MCF 10A (cell line): ENCODE measurements at regions of chr7 and their contacts with region 1.

Region 1: GRCh38 chr7:92621026-92621540 is 30.9 kb upstream of the FAM133B start:
- DNase-seq: peak; percentile 81
- H3K4me3 Mint-ChIP-seq: peak overlapping the region; percentile 47
- H3K27ac Mint-ChIP-seq: no peak overlapping the region
- H3K4me1 Mint-ChIP-seq: peaks cover 22% of the 10 kb centered on the region
- H3K27me3 Mint-ChIP-seq: no peaks in the 10 kb centered on the region
- CTCF ChIP-seq: peak; percentile 75

Region 2: DNA sequence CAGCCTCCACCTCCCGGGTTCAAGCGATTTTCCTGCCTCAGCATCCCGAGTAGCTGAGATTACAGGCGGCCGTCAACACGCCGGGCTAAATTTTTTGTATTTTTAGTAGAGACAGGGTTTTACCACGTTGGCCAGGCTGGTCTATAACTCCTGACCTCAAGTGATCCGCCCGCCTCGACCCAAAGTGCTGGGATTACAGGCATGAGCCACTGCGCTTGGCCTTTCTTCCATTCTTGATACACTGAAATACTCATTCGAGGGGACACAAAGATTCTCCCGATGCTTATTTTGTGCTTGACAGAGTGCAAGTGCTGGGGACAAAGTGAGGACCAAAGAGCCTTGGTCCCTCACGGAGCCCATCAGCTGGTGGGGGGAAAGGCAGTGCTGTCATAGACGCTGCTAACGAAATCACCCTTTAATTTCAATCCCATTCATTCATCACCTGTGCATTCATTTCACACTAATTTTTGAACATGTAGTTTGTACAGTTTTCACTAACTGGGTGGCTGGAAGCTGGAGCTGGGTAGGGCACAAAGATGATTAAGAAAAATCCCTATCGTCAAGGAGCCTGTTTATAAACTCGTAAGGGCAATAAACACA is 30.3 kb before region 1 on chr7:
- CTCF ChIA-PET with region 1: interaction called, 15 read pairs
- POLR2A ChIA-PET with region 1: interaction called, 3 read pairs
- intact Hi-C with region 1: no loop called
- DNase-seq: no peak
- H3K4me3 Mint-ChIP-seq: peak overlapping the region; percentile 99
- H3K27ac Mint-ChIP-seq: peak overlapping the region; percentile 98
- H3K4me1 Mint-ChIP-seq: peaks cover 20% of the 10 kb centered on the region
- H3K27me3 Mint-ChIP-seq: no peaks in the 10 kb centered on the region
- CTCF ChIP-seq: no peak

Region 3: GRCh38 chr7:92633211-92633906 is 12.3 kb after region 1 on chr7:
- CTCF ChIA-PET with region 1: interaction called, 11 read pairs
- POLR2A ChIA-PET with region 1: interaction called, 3 read pairs
- intact Hi-C with region 1: no loop called
- DNase-seq: peak; percentile 90
- H3K4me3 Mint-ChIP-seq: peak overlapping the region; percentile 60
- H3K27ac Mint-ChIP-seq: peak overlapping the region; percentile 70
- H3K4me1 Mint-ChIP-seq: peaks cover 39% of the 10 kb centered on the region
- H3K27me3 Mint-ChIP-seq: no peaks in the 10 kb centered on the region
- CTCF ChIP-seq: no peak

Region 4: GRCh38 chr7:92691578-92691977 is 70.5 kb after region 1 on chr7:
- CTCF ChIA-PET with region 1: interaction called, 22 read pairs
- POLR2A ChIA-PET with region 1: no interaction called
- intact Hi-C with region 1: loop called (anchors 1 kb)
- DNase-seq: peak; percentile 72
- H3K4me3 Mint-ChIP-seq: no peak overlapping the region
- H3K27ac Mint-ChIP-seq: no peak overlapping the region
- H3K4me1 Mint-ChIP-seq: peaks cover 22% of the 10 kb centered on the region
- H3K27me3 Mint-ChIP-seq: no peaks in the 10 kb centered on the region
- CTCF ChIP-seq: peak; percentile 56

Region 5: DNA sequence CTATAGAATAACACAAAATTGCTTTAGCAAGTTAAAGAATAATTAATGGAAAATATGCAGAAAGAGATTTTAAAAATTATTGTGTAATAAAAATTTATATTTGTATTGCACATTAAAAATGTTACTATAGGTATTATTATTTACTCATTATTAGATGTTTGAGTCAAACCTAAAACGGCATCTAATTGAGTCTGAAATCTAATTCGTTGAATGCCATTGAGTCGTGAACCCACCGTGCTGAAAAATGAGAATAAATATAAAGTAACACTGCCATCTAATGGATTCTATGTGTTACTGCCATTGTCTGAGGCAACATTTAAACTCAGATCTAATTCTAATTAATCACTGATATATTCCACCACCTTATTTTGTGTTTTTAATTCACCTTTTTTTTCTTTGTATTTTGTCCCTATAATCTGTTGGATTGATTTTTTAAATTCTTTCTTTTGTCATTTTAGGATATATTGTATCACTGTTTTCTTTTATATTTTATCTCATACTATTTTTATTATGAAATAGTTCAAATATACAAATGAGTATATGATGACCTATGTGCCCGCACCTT is 434.5 kb after region 1 on chr7:
- CTCF ChIA-PET with region 1: interaction called, 8 read pairs
- POLR2A ChIA-PET with region 1: no interaction called
- intact Hi-C with region 1: loop called (anchors 1 kb)
- DNase-seq: peak; percentile 46
- H3K4me3 Mint-ChIP-seq: no peak overlapping the region
- H3K27ac Mint-ChIP-seq: no peak overlapping the region
- H3K4me1 Mint-ChIP-seq: peaks cover 7% of the 10 kb centered on the region
- H3K27me3 Mint-ChIP-seq: no peaks in the 10 kb centered on the region
- CTCF ChIP-seq: peak; percentile 73